Sigmoid colon (tissue), 7 donors: ENCODE measurements at regions of chr1 and their contacts with region 1.

Region 1: DNA sequence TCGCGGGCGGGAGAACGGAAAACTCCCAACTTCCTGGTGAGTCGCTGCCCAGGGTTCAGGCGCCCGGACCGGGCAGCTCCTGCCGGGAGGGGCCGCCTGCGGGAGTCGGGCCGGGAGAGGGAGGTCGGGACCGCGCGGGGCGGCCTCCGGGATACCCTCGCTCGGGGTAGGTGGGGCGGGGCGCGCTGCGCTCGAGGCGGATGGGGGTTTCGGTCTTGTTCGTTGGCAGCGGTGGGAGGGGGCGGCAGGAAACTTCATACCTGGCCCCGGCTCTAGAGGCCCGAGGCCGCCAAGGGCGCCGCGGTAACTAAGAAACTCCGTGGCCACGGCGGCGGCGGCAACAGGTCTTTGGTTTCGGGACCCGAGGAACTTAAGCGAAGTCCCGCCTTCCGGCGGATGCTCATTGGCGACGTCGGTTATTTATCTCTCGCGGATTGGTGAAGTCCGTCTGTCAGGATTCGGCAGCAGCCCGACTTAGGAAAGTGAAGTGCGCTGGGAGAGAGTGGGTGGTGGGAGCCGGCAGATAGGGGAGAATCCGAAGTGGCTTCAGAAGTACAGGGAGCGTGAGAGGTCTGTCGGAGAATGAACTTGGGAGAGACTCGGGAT is 546 bp downstream of the NEK7 start:
- DNase-seq: peak; percentile 94
- H3K4me3 ChIP-seq: peak overlapping the region; percentile 73 to 99 (median 94)
- H3K27ac ChIP-seq: peak overlapping the region; percentile 97 to 100 (median 99)
- H3K4me1 ChIP-seq: peaks cover 0 to 36% (median 26%) of the 10 kb centered on the region in 4 donors
- H3K27me3 ChIP-seq: no peaks in the 10 kb centered on the region
- CTCF ChIP-seq: no peak
- EP300 ChIP-seq: no peak
- POLR2A ChIP-seq: peak in 1 of 2 donors; percentile 55

Region 2: GRCh38 chr1:197775282-197776262 is 381.8 kb before region 1 on chr1 and contains the start of gene DENND1B:
- intact Hi-C with region 1: loop called (anchors 10 kb)
- DNase-seq: peak; percentile 83
- H3K4me3 ChIP-seq: peak within 1 kb of the TSS; percentile 36 to 78 (median 74)
- H3K27ac ChIP-seq: peak within 1 kb of the TSS; percentile 85 to 86 (median 86)
- H3K4me1 ChIP-seq: peaks cover 0 to 32% (median 22%) of the 10 kb centered on the region in 4 donors
- H3K27me3 ChIP-seq: no peaks in the 10 kb centered on the region
- CTCF ChIP-seq: no peak
- EP300 ChIP-seq: no peak
- POLR2A ChIP-seq: no peak
- total RNA-seq, gene DENND1B: 8.6 to 16.8 (median 11.5) TPM

Region 3: GRCh38 chr1:197838836-197839235 is 318.5 kb before region 1 on chr1:
- intact Hi-C with region 1: no loop called
- DNase-seq: no peak
- H3K4me3 ChIP-seq: no peak overlapping the region
- H3K27ac ChIP-seq: no peak overlapping the region
- H3K4me1 ChIP-seq: no peaks in the 10 kb centered on the region
- H3K27me3 ChIP-seq: no peaks in the 10 kb centered on the region
- CTCF ChIP-seq: no peak
- EP300 ChIP-seq: no peak
- POLR2A ChIP-seq: no peak

Region 4: GRCh38 chr1:197902454-197903195 is 254.7 kb before region 1 on chr1 and contains the start of gene C1orf53:
- intact Hi-C with region 1: loop called (anchors 5 kb)
- DNase-seq: peak; percentile 88
- H3K4me3 ChIP-seq: peak within 1 kb of the TSS; percentile 58 to 80 (median 67)
- H3K27ac ChIP-seq: peak within 1 kb of the TSS; percentile 83 to 88 (median 86)
- H3K4me1 ChIP-seq: peaks cover 0 to 9% (median 3%) of the 10 kb centered on the region in 4 donors
- H3K27me3 ChIP-seq: peaks cover 8 to 44% (median 24%) of the 10 kb centered on the region in 3 donors
- CTCF ChIP-seq: no peak
- EP300 ChIP-seq: no peak
- POLR2A ChIP-seq: no peak
- total RNA-seq, gene C1orf53: 1.2 to 3.3 (median 2.9) TPM in 3 of 4 donors, not detected in the other

Region 5: GRCh38 chr1:198088360-198089071 is 68.8 kb before region 1 on chr1:
- intact Hi-C with region 1: loop called (anchors 10 kb)
- DNase-seq: no peak
- H3K4me3 ChIP-seq: no peak overlapping the region
- H3K27ac ChIP-seq: no peak overlapping the region
- H3K4me1 ChIP-seq: no peaks in the 10 kb centered on the region
- H3K27me3 ChIP-seq: no peaks in the 10 kb centered on the region
- CTCF ChIP-seq: peak in 3 of 4 experiments; percentile 25 to 54 (median 28)
- EP300 ChIP-seq: no peak
- POLR2A ChIP-seq: no peak

Region 6: GRCh38 chr1:198298640-198299039 is 141.3 kb after region 1 on chr1:
- intact Hi-C with region 1: loop called (anchors 10 kb)
- DNase-seq: no peak
- H3K4me3 ChIP-seq: no peak overlapping the region
- H3K27ac ChIP-seq: no peak overlapping the region
- H3K4me1 ChIP-seq: no peaks in the 10 kb centered on the region
- H3K27me3 ChIP-seq: no peaks in the 10 kb centered on the region
- CTCF ChIP-seq: no peak
- EP300 ChIP-seq: no peak
- POLR2A ChIP-seq: no peak